Activated CD4-positive, alpha-beta memory T cell treated with anti-CD3 and anti-CD28 coated beads for 36 hours (primary cell): ENCODE measurements at regions of chr5 and their contacts with region 1.

Region 1: DNA sequence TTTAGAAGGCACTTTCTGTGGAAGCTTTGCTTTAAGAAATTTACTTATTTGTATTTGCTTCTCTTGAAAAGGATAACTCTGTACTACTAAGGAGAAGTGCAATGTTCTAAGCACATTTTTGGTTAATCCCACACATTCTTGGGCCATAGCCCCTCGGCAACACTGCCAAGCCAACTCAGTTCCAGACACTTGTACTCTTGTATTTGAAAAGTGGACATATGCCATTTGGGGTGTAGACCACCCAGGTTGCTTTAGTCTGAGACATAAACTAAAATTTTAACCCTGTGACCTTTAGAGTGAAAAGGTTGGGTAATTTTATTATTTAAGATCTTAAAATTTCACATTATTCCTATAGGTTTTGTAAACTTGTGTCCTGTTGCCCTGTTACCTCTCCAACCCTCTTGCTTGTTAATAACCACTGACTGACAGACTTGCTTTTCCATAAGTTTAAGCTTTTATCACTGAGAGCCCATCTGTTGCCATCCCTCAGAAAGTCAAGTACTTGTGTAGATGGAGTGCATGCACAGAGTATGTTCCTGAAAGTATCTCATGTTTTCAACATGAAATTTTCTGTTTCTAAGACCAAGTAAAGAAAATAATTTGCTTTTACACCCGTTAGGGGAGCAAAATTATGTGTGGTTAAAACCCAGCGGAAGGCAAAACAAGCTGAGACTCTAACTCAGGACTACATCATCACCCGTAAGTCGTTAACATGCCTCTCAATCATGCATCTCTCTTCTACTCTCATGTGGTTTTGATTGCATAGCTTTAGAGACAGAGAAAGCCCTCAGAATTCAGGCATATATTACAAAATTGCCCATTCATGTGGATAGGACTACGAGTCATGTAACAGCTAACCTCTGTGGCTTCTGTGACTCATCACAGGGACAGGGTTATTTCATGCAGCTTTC is 117.3 kb downstream of the GDNF start:
- DNase-seq: peak; percentile 62
- H3K4me3 Mint-ChIP-seq: peak overlapping the region; percentile 6
- H3K27ac Mint-ChIP-seq: peak overlapping the region; percentile 67
- H3K4me1 Mint-ChIP-seq: peaks cover 34% of the 10 kb centered on the region
- H3K27me3 Mint-ChIP-seq: peaks cover 6% of the 10 kb centered on the region

Region 2: GRCh38 chr5:37370864-37371726 is 351.4 kb before region 1 on chr5 and contains the start of gene NUP155:
- CTCF ChIA-PET with region 1: interaction called, 4 read pairs
- POLR2A ChIA-PET with region 1: interaction called, 4 read pairs
- intact Hi-C with region 1: loop called (anchors 1 kb)
- DNase-seq: peak; percentile 94
- H3K4me3 Mint-ChIP-seq: peak within 1 kb of the TSS; percentile 94
- H3K27ac Mint-ChIP-seq: peak within 1 kb of the TSS; percentile 90
- H3K4me1 Mint-ChIP-seq: peaks cover 24% of the 10 kb centered on the region
- H3K27me3 Mint-ChIP-seq: no peaks in the 10 kb centered on the region
- total RNA-seq, gene NUP155: 74.6 to 75.6 TPM

Region 3: DNA sequence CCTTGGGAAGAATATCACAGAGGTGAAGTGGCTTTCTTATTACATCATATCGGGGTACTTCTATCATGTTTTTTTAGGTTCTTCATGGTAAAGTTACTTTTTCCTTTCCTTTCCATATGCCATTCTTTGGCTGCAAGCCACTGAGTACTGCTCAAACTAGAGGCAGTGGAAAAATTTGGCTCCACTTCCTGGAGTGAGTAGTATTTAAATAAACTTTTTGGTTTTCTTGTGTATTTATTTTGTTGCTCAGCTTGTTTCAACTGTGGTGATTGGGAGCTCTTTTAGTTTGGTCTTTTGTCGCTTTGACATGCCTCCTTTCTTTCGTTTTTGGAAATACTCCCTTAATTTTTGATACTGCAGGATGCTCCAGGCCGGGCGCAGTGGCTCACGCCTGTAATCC is 273.6 kb before region 1 on chr5:
- CTCF ChIA-PET with region 1: interaction called, 4 read pairs
- POLR2A ChIA-PET with region 1: no interaction called
- intact Hi-C with region 1: loop called (anchors 2 kb)
- DNase-seq: no peak
- H3K4me3 Mint-ChIP-seq: no peak overlapping the region
- H3K27ac Mint-ChIP-seq: no peak overlapping the region
- H3K4me1 Mint-ChIP-seq: peaks cover 4% of the 10 kb centered on the region
- H3K27me3 Mint-ChIP-seq: no peaks in the 10 kb centered on the region

Region 4: GRCh38 chr5:37738057-37738691 is 15.7 kb after region 1 on chr5:
- CTCF ChIA-PET with region 1: interaction called, 37 read pairs
- POLR2A ChIA-PET with region 1: interaction called, 22 read pairs
- intact Hi-C with region 1: loop called (anchors 1 kb)
- DNase-seq: no peak
- H3K4me3 Mint-ChIP-seq: no peak overlapping the region
- H3K27ac Mint-ChIP-seq: no peak overlapping the region
- H3K4me1 Mint-ChIP-seq: peaks cover 24% of the 10 kb centered on the region
- H3K27me3 Mint-ChIP-seq: no peaks in the 10 kb centered on the region

Region 5: GRCh38 chr5:38556599-38557305 is 834.3 kb after region 1 on chr5 and contains the start of gene LIFR:
- CTCF ChIA-PET with region 1: no interaction called
- POLR2A ChIA-PET with region 1: no interaction called
- intact Hi-C with region 1: loop called (anchors 5 kb)
- DNase-seq: peak; percentile 72
- H3K4me3 Mint-ChIP-seq: peak within 1 kb of the TSS; percentile 75
- H3K27ac Mint-ChIP-seq: no peak within 1 kb of the TSS
- H3K4me1 Mint-ChIP-seq: peaks cover 8% of the 10 kb centered on the region
- H3K27me3 Mint-ChIP-seq: peaks cover 47% of the 10 kb centered on the region
- total RNA-seq, gene LIFR: 0.05 to 0.14 TPM